ENCODE measurements at regions of chr11 and their contacts with region 1.

Region 1: DNA sequence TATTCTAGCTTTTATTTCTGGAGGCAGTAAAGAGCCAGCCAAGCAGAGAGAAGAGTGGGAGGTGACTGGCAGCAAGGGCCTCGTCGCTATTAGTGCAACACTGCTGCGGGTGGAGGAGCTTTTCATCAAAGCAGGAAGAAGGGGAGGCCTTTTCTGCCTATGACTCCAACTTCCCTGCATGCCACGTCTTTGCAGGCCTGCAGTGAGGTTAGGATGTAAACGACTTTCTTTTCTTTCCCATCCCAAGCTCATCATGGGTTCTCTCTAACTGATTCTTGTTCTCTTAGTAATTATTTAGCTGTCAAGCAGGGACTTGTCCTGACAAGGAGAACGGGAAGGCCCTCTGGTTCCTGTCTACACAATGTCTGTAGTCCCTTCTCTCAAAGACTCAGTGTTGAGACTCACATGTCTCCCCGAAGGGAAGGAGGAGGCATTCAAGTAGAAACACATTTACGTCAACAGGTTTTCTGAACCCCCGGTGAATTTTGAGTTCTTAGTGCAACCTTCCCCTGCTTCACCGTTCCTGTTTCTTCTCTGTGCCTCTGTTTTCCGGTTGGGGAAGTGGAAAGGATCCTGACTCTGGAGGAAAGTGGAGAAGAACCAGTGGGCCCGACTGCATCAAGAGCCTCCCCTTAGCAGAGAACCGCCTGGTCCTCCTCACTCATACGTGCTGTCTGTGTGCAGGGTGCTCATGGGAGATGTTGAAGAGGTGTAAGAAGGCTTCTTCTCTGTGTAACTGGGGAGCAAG is 56.9 kb downstream of the PACS1 start:
- DNase-seq: no peak
- ATAC-seq: peak; percentile 87
- H3K4me3 ChIP-seq: peak overlapping the region; percentile 60
- H3K27ac ChIP-seq: peak overlapping the region; percentile 91
- H3K4me1 ChIP-seq: peaks cover 52% of the 10 kb centered on the region
- H3K27me3 ChIP-seq: no peaks in the 10 kb centered on the region
- CTCF ChIP-seq: 0 out of 6 replicates have a peak, but pooled peaks of 1 of the 3 experiments have one; percentile 9
- EP300 ChIP-seq: no peak
- POLR2A ChIP-seq: peak; percentile 64
- RAD21 ChIP-seq: no peak

Region 2: DNA sequence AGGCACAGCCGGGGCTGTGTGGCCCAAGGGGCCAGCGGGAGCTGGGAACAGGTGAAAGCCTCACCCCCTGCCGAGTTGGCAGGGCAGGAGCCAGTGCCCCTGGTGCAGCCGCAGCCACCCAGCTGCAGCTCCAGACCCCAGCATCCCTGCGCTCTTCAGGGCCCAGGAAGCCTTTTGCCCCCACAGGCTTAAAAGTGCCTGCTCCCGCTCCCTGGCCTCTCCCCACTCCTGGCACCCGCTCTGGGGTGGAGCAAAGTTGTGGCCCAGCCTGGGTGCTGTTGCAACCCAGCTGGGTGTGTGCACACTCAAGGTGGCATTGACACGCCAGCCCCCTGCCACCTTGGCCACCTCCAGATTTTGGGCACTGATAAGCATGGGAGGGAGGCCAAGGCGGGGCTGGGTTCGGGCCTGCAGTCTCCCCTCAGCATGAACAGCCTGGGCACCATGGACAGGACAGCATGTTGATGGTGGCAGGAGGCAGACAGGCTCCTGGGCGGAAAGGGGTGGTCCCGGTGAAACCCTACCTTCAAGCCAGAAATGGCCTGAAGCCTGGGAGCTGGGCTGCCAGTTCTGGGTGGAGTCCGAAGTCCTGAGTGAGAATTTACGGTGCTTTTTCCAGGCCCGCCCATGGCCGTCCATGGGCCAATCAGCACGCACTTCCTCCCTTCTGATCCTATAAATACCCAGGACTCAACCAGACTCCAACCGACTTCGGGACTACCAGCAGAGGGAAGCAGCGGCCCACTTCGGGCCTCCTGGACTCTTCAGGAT is 382.9 kb before region 1 on chr11:
- CTCF ChIA-PET with region 1: no interaction called
- POLR2A ChIA-PET with region 1: no interaction called
- RAD21 ChIA-PET with region 1: no interaction called
- SMC1A ChIA-PET with region 1: no interaction called
- in situ Hi-C with region 1: no loop called
- intact Hi-C with region 1: no loop called
- DNase-seq: no peak
- ATAC-seq: peak; percentile 56
- H3K4me3 ChIP-seq: no peak overlapping the region
- H3K27ac ChIP-seq: no peak overlapping the region
- H3K4me1 ChIP-seq: no peaks in the 10 kb centered on the region
- H3K27me3 ChIP-seq: no peaks in the 10 kb centered on the region; a peak in 1 of 4 replicates
- CTCF ChIP-seq: peak in 1 of 3 experiments; percentile 22; a peak in 2 of 6 replicates
- EP300 ChIP-seq: no peak
- POLR2A ChIP-seq: no peak
- RAD21 ChIP-seq: no peak

Region 3: DNA sequence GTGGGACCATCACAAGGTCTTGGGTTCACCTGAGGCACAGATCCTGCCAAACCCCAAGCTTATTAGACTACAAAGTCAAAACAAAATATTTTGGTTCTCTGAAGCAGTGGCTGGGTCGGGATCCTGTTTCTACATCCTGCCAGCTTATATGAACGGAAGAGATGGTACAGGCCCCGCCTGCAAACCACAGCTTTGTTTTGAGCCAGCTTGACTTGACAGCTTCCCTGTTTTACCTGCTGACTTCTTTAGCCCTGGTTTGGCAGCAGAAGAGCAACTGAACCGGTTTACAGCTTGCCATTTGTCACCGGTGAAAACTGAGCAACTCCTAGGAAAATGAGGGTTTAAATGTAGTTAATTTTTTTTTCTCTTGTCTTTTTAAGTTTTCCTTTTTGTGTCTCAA is 45.5 kb before region 1 on chr11:
- CTCF ChIA-PET with region 1: interaction called, 6 read pairs
- POLR2A ChIA-PET with region 1: interaction called, 5 read pairs
- RAD21 ChIA-PET with region 1: interaction called, 18 read pairs
- SMC1A ChIA-PET with region 1: interaction called, 265 read pairs
- in situ Hi-C with region 1: no loop called
- intact Hi-C with region 1: no loop called
- DNase-seq: no peak
- ATAC-seq: peak; percentile 93
- H3K4me3 ChIP-seq: peak overlapping the region; percentile 8; the same call in 1 of the 2 replicates
- H3K27ac ChIP-seq: peak overlapping the region; percentile 60
- H3K4me1 ChIP-seq: peaks cover 31% of the 10 kb centered on the region
- H3K27me3 ChIP-seq: no peaks in the 10 kb centered on the region
- CTCF ChIP-seq: no peak
- EP300 ChIP-seq: no peak
- POLR2A ChIP-seq: no peak
- RAD21 ChIP-seq: no peak

Measured in GM12878 (cell line).